Endothelial cell of umbilical vein (primary cell): ENCODE measurements at regions of chr3 and their contacts with region 1.

Region 1: GRCh38 chr3:194265483-194265892 is 85.6 kb downstream of the CPN2 start:
- DNase-seq: peak; percentile 99
- H3K4me3 ChIP-seq: no peak overlapping the region
- H3K27ac ChIP-seq: peak overlapping the region; percentile 97
- H3K4me1 ChIP-seq: peaks cover 39% of the 10 kb centered on the region
- H3K27me3 ChIP-seq: no peaks in the 10 kb centered on the region
- CTCF ChIP-seq: no peak
- POLR2A ChIP-seq: no peak

Region 2: GRCh38 chr3:193788189-193788991 is 477.1 kb before region 1 on chr3:
- CTCF ChIA-PET with region 1: interaction called, 6 read pairs
- POLR2A ChIA-PET with region 1: no interaction called
- dilution Hi-C with region 1: no loop called
- intact Hi-C with region 1: loop called (anchors 1 kb)
- DNase-seq: peak; percentile 76
- H3K4me3 ChIP-seq: no peak overlapping the region
- H3K27ac ChIP-seq: no peak overlapping the region
- H3K4me1 ChIP-seq: peaks cover 5% of the 10 kb centered on the region
- H3K27me3 ChIP-seq: peaks cover 0 to 1% of the 10 kb centered on the region in 2 experiments
- CTCF ChIP-seq: peak; percentile 82 to 88
- POLR2A ChIP-seq: no peak

Region 3: GRCh38 chr3:194003125-194004057 is 262.1 kb before region 1 on chr3:
- CTCF ChIA-PET with region 1: interaction called, 9 read pairs
- POLR2A ChIA-PET with region 1: no interaction called
- dilution Hi-C with region 1: no loop called
- intact Hi-C with region 1: loop called (anchors 1 kb)
- DNase-seq: peak; percentile 99
- H3K4me3 ChIP-seq: no peak overlapping the region
- H3K27ac ChIP-seq: peak overlapping the region; percentile 97
- H3K4me1 ChIP-seq: peaks cover 35% of the 10 kb centered on the region
- H3K27me3 ChIP-seq: no peaks in the 10 kb centered on the region
- CTCF ChIP-seq: no peak
- POLR2A ChIP-seq: peak; percentile 22

Region 4: DNA sequence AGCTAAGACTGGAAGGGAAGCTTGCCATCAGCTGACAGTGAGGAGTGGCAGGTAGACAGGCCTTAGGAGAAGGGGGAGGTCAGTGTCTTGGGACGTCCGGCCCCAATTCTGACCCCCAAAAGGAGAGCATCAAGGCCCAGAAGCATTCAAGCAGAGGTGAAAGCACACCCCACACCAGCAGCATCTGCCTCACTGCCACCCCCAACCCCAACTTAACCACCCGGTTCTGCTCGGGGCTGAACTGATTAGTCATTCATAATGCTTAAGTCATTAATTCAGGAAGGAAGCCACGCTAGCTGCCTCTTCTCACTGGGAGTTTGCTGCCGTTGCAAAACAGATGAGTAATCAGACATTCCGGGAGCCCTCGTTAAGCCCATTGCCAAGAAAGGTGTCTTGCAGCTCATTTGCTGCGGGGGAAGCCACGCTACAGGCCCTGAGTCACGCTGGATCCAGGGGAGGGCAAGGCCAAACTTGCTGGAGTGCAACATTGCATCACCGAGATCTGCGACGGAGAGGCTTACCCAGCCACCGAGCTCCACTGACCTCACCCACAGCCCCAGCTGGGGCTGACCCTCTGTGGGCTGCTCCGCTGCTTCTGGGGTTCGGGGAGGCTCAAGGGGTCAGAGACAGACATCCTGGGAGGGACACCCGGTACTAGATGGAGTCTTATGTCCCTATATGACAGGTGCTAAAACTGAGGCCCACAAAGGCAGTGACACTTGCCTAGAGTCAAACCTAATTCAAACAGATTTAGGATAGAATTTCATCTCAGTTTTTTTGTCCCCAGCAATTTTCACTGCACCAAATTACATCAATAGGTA is 175.9 kb before region 1 on chr3:
- CTCF ChIA-PET with region 1: no interaction called
- POLR2A ChIA-PET with region 1: no interaction called
- dilution Hi-C with region 1: no loop called
- intact Hi-C with region 1: loop called (anchors 1 kb)
- DNase-seq: peak; percentile 99
- H3K4me3 ChIP-seq: no peak overlapping the region
- H3K27ac ChIP-seq: peak overlapping the region; percentile 94
- H3K4me1 ChIP-seq: peaks cover 22% of the 10 kb centered on the region
- H3K27me3 ChIP-seq: no peaks in the 10 kb centered on the region
- CTCF ChIP-seq: no peak
- POLR2A ChIP-seq: no peak

Region 5: DNA sequence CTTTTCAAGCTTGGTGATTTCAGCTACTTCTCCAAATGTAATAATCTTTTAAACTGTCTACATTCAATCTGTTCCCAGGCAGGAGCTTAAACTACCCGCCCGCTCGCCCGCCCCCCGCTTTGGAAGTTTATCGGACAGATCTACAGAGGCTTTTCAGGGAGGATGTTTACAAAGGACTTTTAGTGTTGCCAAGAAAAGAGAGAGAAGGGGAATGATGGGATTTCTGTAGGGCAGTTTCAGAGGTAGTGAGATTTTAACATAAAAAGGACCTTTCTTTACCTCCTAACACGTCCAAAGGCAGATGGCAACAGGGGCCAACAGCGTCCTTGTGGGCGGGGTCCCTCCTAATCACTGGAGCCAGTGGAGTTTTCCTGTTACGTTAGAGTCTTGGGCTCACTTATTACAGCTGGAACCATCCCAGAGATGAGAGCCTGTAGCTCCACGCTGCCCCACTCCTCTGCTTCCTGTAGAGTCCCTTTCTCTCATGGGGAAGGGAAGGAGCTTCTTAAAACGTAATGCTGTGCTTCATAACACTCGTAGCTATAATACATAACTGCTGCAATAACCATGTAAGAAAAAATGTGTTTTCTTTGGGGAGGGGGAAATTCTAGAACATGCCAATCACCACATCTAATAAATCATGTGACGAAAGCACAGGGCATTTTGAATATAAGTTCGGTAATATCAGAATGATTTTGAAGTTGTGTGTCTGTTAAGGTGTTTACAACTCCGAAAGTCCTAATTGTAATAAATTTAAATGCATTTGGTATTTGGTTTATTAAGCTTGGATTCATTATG is 98.6 kb before region 1 on chr3:
- CTCF ChIA-PET with region 1: interaction called, 11 read pairs
- POLR2A ChIA-PET with region 1: no interaction called
- dilution Hi-C with region 1: no loop called
- intact Hi-C with region 1: no loop called
- DNase-seq: peak; percentile 63
- H3K4me3 ChIP-seq: peak overlapping the region in 1 of 3 experiments; percentile 3
- H3K27ac ChIP-seq: no peak overlapping the region
- H3K4me1 ChIP-seq: peaks cover 11% of the 10 kb centered on the region
- H3K27me3 ChIP-seq: peaks cover 14 to 23% of the 10 kb centered on the region in 2 experiments
- CTCF ChIP-seq: no peak
- POLR2A ChIP-seq: no peak

Region 6: DNA sequence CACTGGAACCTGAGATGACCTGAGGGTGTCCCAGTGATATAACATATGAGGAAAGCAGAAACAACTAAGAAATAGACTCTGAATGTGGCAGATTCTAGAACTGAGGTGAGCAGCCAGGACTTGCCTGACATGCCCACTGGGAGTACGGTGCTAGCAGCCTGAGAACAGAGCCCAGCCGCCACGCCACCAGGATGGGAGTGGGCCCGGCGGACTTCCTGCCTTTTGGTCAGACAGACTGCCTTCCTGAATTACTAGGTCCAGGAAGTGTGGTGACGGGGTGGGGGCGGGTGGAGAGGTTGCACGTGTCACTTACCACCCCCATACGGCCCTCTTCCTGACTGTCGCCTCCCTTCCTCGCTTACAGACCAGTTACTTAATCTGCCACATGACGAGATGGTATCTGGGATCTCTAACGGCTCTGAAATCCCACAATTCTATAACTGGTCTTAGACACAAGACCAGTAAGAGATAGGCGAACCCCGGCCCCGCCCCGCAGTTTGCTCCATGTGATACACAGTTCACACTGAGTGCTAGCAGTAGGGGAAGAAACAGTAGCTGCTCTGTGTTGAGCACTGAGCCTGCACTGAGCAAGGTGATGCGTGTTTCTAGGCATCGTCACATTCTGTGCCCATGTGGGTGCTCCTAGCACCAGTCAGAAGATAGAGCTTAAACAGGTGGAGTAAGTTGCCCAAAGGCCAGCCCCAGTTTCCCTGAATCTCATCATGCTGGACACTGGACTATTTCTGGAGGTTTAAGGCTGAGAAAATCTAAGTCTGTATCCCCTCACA is 10.0 kb before region 1 on chr3:
- CTCF ChIA-PET with region 1: interaction called, 9 read pairs
- POLR2A ChIA-PET with region 1: interaction called, 3 read pairs
- dilution Hi-C with region 1: no loop called
- intact Hi-C with region 1: loop called (anchors 1 kb)
- DNase-seq: peak; percentile 94
- H3K4me3 ChIP-seq: no peak overlapping the region
- H3K27ac ChIP-seq: peak overlapping the region; percentile 85
- H3K4me1 ChIP-seq: peaks cover 14% of the 10 kb centered on the region
- H3K27me3 ChIP-seq: no peaks in the 10 kb centered on the region
- CTCF ChIP-seq: peak in 1 of 2 donors; percentile 6
- POLR2A ChIP-seq: no peak

Region 7: DNA sequence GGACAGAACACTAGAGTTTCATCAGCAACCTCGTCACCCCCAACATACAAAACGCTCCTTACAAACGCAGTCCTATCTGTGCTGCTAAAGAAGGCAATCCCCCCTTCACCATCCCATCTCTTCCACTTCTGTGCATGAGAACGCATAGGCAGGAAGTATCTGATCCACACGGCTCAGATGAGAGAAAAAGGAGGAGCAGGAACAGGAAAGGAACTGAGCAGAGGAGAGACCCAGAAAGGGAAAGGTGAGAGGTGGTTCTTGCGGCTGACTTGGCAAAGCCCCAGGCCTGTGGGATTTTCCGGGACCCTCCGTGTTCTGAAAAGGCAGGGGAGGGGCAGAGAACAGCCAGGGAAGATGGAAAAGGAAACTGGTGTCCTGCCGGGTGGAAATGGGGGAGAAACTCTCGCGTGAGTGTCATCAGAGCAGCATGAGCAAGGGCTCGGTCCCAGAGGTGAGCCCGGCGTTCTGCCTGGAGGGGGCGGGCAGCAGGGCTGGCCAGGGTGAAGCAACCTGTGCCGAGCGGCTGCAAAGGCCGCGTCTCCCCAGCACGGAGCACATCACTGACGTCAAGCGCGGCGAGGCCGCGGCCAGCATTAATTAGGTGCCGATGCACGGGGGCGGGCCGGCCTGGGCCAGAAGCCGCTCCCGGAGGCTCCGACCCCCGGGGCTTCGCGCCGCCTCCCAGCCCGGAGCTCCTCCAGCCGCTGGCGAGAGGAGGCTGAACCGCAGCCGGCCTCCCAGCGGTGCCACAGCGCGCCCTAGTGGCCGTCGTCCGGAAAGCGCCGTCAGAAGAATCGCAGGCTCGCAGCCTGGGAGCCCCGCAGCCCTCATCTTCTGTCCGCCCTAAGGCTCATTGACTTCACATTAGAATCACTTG is 49.8 kb after region 1 on chr3:
- CTCF ChIA-PET with region 1: interaction called, 101 read pairs
- POLR2A ChIA-PET with region 1: interaction called, 8 read pairs
- dilution Hi-C with region 1: no loop called
- intact Hi-C with region 1: loop called (anchors 1 kb)
- DNase-seq: peak; percentile 84
- H3K4me3 ChIP-seq: peak overlapping the region; percentile 18 to 44 (median 37)
- H3K27ac ChIP-seq: peak overlapping the region; percentile 45
- H3K4me1 ChIP-seq: peaks cover 7% of the 10 kb centered on the region
- H3K27me3 ChIP-seq: peaks cover 4 to 5% of the 10 kb centered on the region in 2 experiments
- CTCF ChIP-seq: peak; percentile 86 to 92
- POLR2A ChIP-seq: no peak